ENCODE measurements at regions of chr6 and their contacts with region 1.

Region 1: GRCh38 chr6:142207265-142207877 is 60.3 kb downstream of the VTA1 start:
- DNase-seq: peak; percentile 22 to 73
- ATAC-seq: peak; percentile 57 to 58 (median 57)
- H3K4me3 ChIP-seq: no peak overlapping the region
- H3K4me3 Mint-ChIP-seq: no peak overlapping the region
- H3K27ac ChIP-seq: no peak overlapping the region
- H3K27ac Mint-ChIP-seq: peak overlapping the region in 1 of 2 donors; percentile 17
- H3K4me1 ChIP-seq: no peaks in the 10 kb centered on the region
- H3K4me1 Mint-ChIP-seq: no peaks in the 10 kb centered on the region
- H3K27me3 ChIP-seq: no peaks in the 10 kb centered on the region
- H3K27me3 Mint-ChIP-seq: no peaks in the 10 kb centered on the region
- CTCF ChIP-seq: peak; percentile 76

Region 2: GRCh38 chr6:142132625-142133024 is 74.7 kb before region 1 on chr6 and contains the start of gene GJE1:
- intact Hi-C with region 1: no loop called
- DNase-seq: no peak
- ATAC-seq: no peak
- H3K4me3 ChIP-seq: no peak within 1 kb of the TSS
- H3K4me3 Mint-ChIP-seq: no peak within 1 kb of the TSS
- H3K27ac ChIP-seq: no peak within 1 kb of the TSS
- H3K27ac Mint-ChIP-seq: no peak within 1 kb of the TSS
- H3K4me1 ChIP-seq: no peaks in the 10 kb centered on the region
- H3K4me1 Mint-ChIP-seq: no peaks in the 10 kb centered on the region
- H3K27me3 ChIP-seq: peaks cover 7% of the 10 kb centered on the region
- H3K27me3 Mint-ChIP-seq: peaks cover 14 to 47% of the 10 kb centered on the region in 2 donors
- CTCF ChIP-seq: no peak
- total RNA-seq, gene GJE1: not detected

Region 3: DNA sequence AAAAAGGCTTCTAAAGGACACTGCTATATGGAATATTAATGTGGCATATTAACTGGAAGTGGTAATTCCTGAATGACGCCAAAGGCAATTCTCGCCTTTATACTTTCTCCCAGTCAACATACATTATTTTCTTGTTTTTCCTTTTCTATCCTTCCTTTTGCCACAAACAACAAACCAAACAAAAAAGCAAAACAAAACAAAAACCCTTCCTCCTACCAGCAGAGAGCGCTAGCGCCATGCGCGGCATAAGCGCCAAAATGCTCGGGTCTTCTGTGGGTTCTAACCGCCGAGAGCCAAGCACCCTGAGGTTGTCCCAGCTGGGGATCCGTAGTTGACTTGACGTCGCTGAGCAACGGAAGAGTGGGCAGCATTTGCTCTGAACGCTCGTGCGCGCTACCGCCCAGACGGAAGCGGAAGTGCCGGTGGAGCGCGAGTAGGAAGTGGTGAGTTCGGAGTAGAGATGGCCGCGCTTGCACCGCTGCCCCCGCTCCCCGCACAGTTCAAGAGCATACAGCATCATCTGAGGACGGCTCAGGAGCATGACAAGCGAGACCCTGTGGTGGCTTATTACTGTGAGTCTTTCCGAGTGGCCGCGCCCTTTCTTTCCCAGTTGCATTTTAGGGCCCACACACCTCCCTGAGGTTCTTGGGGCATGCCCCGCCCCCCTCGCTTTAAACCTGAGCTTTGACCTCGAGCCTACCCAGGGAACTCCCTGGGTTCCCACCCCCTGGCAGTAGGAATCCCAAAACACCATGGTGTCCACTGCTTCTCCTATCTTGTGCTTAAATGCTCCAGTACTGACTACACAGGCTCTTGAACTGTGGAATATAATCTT is 60.3 kb before region 1 on chr6 and contains the starts of genes NMBR and VTA1:
- intact Hi-C with region 1: loop called (anchors 1 kb)
- DNase-seq: peak; percentile 95 to 100
- ATAC-seq: peak; percentile 94 to 99 (median 95)
- H3K4me3 ChIP-seq: peak within 1 kb of the TSS; percentile 74
- H3K4me3 Mint-ChIP-seq: peak within 1 kb of the TSS; percentile 91
- H3K27ac ChIP-seq: peak within 1 kb of the TSS; percentile 64
- H3K27ac Mint-ChIP-seq: peak within 1 kb of the TSS; percentile 88 to 97
- H3K4me1 ChIP-seq: no peaks in the 10 kb centered on the region
- H3K4me1 Mint-ChIP-seq: peaks cover 50 to 55% of the 10 kb centered on the region in 2 donors
- H3K27me3 ChIP-seq: no peaks in the 10 kb centered on the region
- H3K27me3 Mint-ChIP-seq: peaks cover 9 to 16% of the 10 kb centered on the region in 2 donors
- CTCF ChIP-seq: peak; percentile 92
- total RNA-seq, gene NMBR: not detected
- total RNA-seq, gene VTA1: 20.5 to 33.3 (median 21.3) TPM

Region 4: GRCh38 chr6:142184307-142184706 is 23.1 kb before region 1 on chr6:
- intact Hi-C with region 1: loop called (anchors 1 kb)
- DNase-seq: no peak
- ATAC-seq: no peak
- H3K4me3 ChIP-seq: no peak overlapping the region
- H3K4me3 Mint-ChIP-seq: no peak overlapping the region
- H3K27ac ChIP-seq: no peak overlapping the region
- H3K27ac Mint-ChIP-seq: no peak overlapping the region
- H3K4me1 ChIP-seq: no peaks in the 10 kb centered on the region
- H3K4me1 Mint-ChIP-seq: peaks cover 9 to 15% of the 10 kb centered on the region in 2 donors
- H3K27me3 ChIP-seq: no peaks in the 10 kb centered on the region
- H3K27me3 Mint-ChIP-seq: no peaks in the 10 kb centered on the region
- CTCF ChIP-seq: no peak

Region 5: DNA sequence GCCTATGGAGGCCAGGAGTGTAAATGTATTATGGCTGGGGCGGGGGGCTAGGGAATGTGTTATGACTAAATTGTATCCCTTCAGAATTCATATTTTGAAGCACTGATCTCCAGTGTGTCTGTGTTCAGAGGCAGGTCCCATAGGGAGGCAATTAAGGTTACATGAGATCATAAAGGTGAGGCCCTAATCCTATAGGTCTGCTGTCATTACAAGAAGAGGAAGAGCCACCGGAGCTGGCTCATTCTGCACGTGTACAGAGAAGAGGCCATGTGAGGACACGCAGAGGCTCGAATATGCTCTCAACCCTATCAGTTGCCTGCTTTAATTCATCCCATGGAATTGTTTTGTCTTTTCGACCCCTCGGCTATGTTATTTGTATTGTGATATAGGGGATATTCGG is 16.6 kb after region 1 on chr6:
- intact Hi-C with region 1: no loop called
- DNase-seq: no peak
- ATAC-seq: no peak
- H3K4me3 ChIP-seq: no peak overlapping the region
- H3K4me3 Mint-ChIP-seq: no peak overlapping the region
- H3K27ac ChIP-seq: no peak overlapping the region
- H3K27ac Mint-ChIP-seq: no peak overlapping the region
- H3K4me1 ChIP-seq: no peaks in the 10 kb centered on the region
- H3K4me1 Mint-ChIP-seq: no peaks in the 10 kb centered on the region
- H3K27me3 ChIP-seq: no peaks in the 10 kb centered on the region
- H3K27me3 Mint-ChIP-seq: no peaks in the 10 kb centered on the region
- CTCF ChIP-seq: no peak